ENCODE measurements at regions of chr7 and their contacts with region 1.

Region 1: GRCh38 chr7:18655912-18656311 is 160.4 kb downstream of the HDAC9 start:
- DNase-seq: no peak
- ATAC-seq: no peak
- H3K4me3 ChIP-seq: no peak overlapping the region
- H3K27ac ChIP-seq: no peak overlapping the region
- H3K4me1 ChIP-seq: no peaks in the 10 kb centered on the region
- H3K27me3 ChIP-seq: no peaks in the 10 kb centered on the region
- CTCF ChIP-seq: no peak
- POLR2A ChIP-seq: no peak
- RAD21 ChIP-seq: no peak

Region 2: GRCh38 chr7:18356191-18356645 is 299.7 kb before region 1 on chr7:
- CTCF ChIA-PET with region 1: no interaction called
- POLR2A ChIA-PET with region 1: no interaction called
- RAD21 ChIA-PET with region 1: no interaction called
- intact Hi-C with region 1: no loop called
- DNase-seq: peak; percentile 26
- ATAC-seq: peak; percentile 38; the same call in 1 of the 2 replicates
- H3K4me3 ChIP-seq: no peak overlapping the region; a peak in 1 of 4 replicates
- H3K27ac ChIP-seq: no peak overlapping the region
- H3K4me1 ChIP-seq: peaks cover 0 to 3% of the 10 kb centered on the region in 2 experiments; a peak in 2 of 4 replicates
- H3K27me3 ChIP-seq: no peaks in the 10 kb centered on the region
- CTCF ChIP-seq: peak; percentile 53 to 79 (median 71)
- POLR2A ChIP-seq: no peak
- RAD21 ChIP-seq: peak; percentile 49

Region 3: GRCh38 chr7:18666107-18666728 is 10.3 kb after region 1 on chr7:
- CTCF ChIA-PET with region 1: interaction called, 11 read pairs
- POLR2A ChIA-PET with region 1: no interaction called
- RAD21 ChIA-PET with region 1: no interaction called
- intact Hi-C with region 1: no loop called
- DNase-seq: peak; percentile 78
- ATAC-seq: peak; percentile 98
- H3K4me3 ChIP-seq: no peak overlapping the region
- H3K27ac ChIP-seq: no peak overlapping the region
- H3K4me1 ChIP-seq: peaks cover 6 to 24% of the 10 kb centered on the region in 2 experiments
- H3K27me3 ChIP-seq: no peaks in the 10 kb centered on the region
- CTCF ChIP-seq: peak; percentile 67 to 97 (median 91); a peak in 5 of 6 replicates
- POLR2A ChIP-seq: no peak
- RAD21 ChIP-seq: peak; percentile 78